ENCODE measurements at regions of chr12 and their contacts with region 1.

Region 1: DNA sequence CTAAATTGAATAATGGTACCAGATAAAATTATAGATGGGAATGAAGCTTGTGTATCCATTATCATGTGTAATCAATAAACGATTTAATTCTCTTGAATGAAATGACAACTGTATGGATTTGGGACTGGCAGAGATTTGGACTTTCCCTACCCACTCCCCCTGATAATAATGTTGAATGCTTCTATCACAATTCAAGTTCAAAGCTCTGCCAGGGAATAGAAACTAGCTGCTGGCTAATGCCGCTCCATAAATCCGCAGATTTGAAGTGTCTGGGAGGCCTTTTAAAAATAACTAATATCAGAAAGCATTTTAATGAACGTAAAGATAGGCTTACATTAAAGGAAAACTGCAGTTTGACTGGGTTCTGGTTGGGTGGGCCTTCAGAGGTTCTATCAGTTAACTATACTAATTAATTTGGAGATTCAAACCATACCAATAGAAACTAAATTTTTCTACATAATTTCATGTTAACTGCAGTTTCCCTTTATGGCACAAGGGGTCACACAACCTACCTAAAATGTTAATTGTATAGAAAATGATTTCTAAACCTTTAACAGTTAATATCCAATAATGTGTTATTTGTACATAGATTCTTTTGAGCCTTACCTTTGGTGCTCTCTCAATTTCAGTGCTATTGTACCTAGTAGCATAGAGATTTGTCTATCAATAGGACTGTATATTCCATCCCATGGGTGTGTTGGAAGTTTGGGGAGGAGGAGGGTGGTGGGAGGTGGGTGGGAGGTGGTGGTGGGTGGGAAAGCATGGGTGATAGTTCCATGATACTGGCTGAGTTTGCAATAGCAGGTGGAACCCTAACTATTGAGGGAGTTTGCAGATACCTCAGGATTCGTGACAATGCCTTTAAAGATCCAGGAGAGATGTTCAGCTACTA is 4.9 kb downstream of the HNRNPA1 start:
- DNase-seq: peak in 1 of 4 experiments; percentile 10
- ATAC-seq: peak; percentile 0; the same call in 1 of the 3 replicates
- H3K4me3 ChIP-seq: peak overlapping the region; percentile 71
- H3K27ac ChIP-seq: peak overlapping the region; percentile 75
- H3K4me1 ChIP-seq: peaks cover 22 to 31% of the 10 kb centered on the region in 2 experiments; a peak in 4 of 5 replicates
- H3K27me3 ChIP-seq: no peaks in the 10 kb centered on the region
- CTCF ChIP-seq: peak in 1 of 3 experiments; percentile 33; a peak in 2 of 6 replicates
- EP300 ChIP-seq: no peak
- POLR2A ChIP-seq: peak; percentile 12
- RAD21 ChIP-seq: peak; percentile 20 to 29; a peak in 2 of 4 replicates

Region 2: GRCh38 chr12:54147186-54147585 is 138.2 kb before region 1 on chr12:
- CTCF ChIA-PET with region 1: no interaction called
- POLR2A ChIA-PET with region 1: no interaction called
- in situ Hi-C with region 1: no loop called
- intact Hi-C with region 1: no loop called
- DNase-seq: no peak
- ATAC-seq: no peak
- H3K4me3 ChIP-seq: no peak overlapping the region
- H3K27ac ChIP-seq: no peak overlapping the region
- H3K4me1 ChIP-seq: no peaks in the 10 kb centered on the region
- H3K27me3 ChIP-seq: peaks cover 4 to 34% of the 10 kb centered on the region in 2 experiments; a peak in 4 of 5 replicates
- CTCF ChIP-seq: no peak
- EP300 ChIP-seq: no peak
- POLR2A ChIP-seq: no peak
- RAD21 ChIP-seq: peak in 1 of 2 experiments; percentile 16; a peak in 1 of 4 replicates

Region 3: GRCh38 chr12:54220092-54220557 is 65.3 kb before region 1 on chr12:
- CTCF ChIA-PET with region 1: no interaction called
- POLR2A ChIA-PET with region 1: interaction called, 18 read pairs
- in situ Hi-C with region 1: no loop called
- intact Hi-C with region 1: loop called (anchors 5 kb)
- DNase-seq: peak; percentile 75 to 88 (median 78)
- ATAC-seq: peak; percentile 81
- H3K4me3 ChIP-seq: no peak overlapping the region
- H3K27ac ChIP-seq: peak overlapping the region; percentile 66
- H3K4me1 ChIP-seq: peaks cover 29 to 34% of the 10 kb centered on the region in 2 experiments; a peak in 4 of 5 replicates
- H3K27me3 ChIP-seq: no peaks in the 10 kb centered on the region
- CTCF ChIP-seq: peak; percentile 91 to 94 (median 93)
- EP300 ChIP-seq: no peak
- POLR2A ChIP-seq: no peak
- RAD21 ChIP-seq: peak; percentile 95 to 98

Region 4: DNA sequence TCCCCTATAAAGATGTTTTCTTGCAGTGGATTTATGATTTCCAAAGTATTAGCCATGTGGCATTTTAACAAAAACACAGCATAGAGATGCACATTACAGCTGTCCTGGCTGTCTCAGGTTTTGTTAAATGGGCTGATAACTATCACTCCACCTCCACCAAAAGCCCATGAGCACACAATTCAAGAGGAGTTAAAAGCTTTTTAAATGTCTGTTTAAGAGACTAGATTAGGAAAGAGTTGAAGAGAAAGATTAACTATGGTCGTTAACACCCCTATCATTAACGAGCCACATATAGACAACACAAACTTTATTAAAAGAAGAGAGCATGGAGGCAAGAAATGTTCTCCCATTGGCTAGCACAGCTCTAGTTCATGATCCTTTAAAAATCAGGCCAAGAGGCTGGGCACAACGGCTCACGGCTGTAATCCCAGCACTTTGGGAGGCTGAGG is 20.0 kb before region 1 on chr12:
- CTCF ChIA-PET with region 1: no interaction called
- POLR2A ChIA-PET with region 1: interaction called, 58 read pairs
- in situ Hi-C with region 1: no loop called
- intact Hi-C with region 1: loop called (anchors 1 kb)
- DNase-seq: no peak
- ATAC-seq: peak; percentile 17
- H3K4me3 ChIP-seq: no peak overlapping the region
- H3K27ac ChIP-seq: peak overlapping the region; percentile 16; the same call in 1 of the 3 replicates
- H3K4me1 ChIP-seq: peaks cover 25 to 26% of the 10 kb centered on the region in 2 experiments; a peak in 4 of 5 replicates
- H3K27me3 ChIP-seq: no peaks in the 10 kb centered on the region
- CTCF ChIP-seq: no peak
- EP300 ChIP-seq: no peak
- POLR2A ChIP-seq: no peak
- RAD21 ChIP-seq: no peak

Region 5: GRCh38 chr12:54306925-54307741 is 21.7 kb after region 1 on chr12:
- CTCF ChIA-PET with region 1: no interaction called
- POLR2A ChIA-PET with region 1: interaction called, 20 read pairs
- in situ Hi-C with region 1: no loop called
- intact Hi-C with region 1: no loop called
- DNase-seq: peak; percentile 90 to 100 (median 92)
- ATAC-seq: peak; percentile 83
- H3K4me3 ChIP-seq: no peak overlapping the region
- H3K27ac ChIP-seq: peak overlapping the region; percentile 54
- H3K4me1 ChIP-seq: peaks cover 43 to 49% of the 10 kb centered on the region in 2 experiments
- H3K27me3 ChIP-seq: no peaks in the 10 kb centered on the region
- CTCF ChIP-seq: no peak
- EP300 ChIP-seq: peak; percentile 78
- POLR2A ChIP-seq: peak; percentile 64
- RAD21 ChIP-seq: peak in 1 of 2 experiments; percentile 12; a peak in 1 of 4 replicates

Region 6: GRCh38 chr12:54359033-54359761 is 73.8 kb after region 1 on chr12:
- CTCF ChIA-PET with region 1: no interaction called
- POLR2A ChIA-PET with region 1: interaction called, 57 read pairs
- in situ Hi-C with region 1: loop called (anchors 10 kb)
- intact Hi-C with region 1: loop called (anchors 1 kb)
- DNase-seq: peak; percentile 98 to 100 (median 99)
- ATAC-seq: peak; percentile 88
- H3K4me3 ChIP-seq: peak overlapping the region; percentile 53
- H3K27ac ChIP-seq: peak overlapping the region; percentile 90
- H3K4me1 ChIP-seq: peaks cover 34 to 43% of the 10 kb centered on the region in 2 experiments
- H3K27me3 ChIP-seq: no peaks in the 10 kb centered on the region
- CTCF ChIP-seq: peak in 1 of 3 experiments; percentile 2; a peak in 1 of 6 replicates
- EP300 ChIP-seq: peak; percentile 98
- POLR2A ChIP-seq: peak; percentile 70
- RAD21 ChIP-seq: peak in 1 of 2 experiments; percentile 57; a peak in 3 of 4 replicates

Measured in K562 (cell line).